HAP-1 (cell line): ENCODE measurements at regions of chr2 and their contacts with region 1.

Region 1: DNA sequence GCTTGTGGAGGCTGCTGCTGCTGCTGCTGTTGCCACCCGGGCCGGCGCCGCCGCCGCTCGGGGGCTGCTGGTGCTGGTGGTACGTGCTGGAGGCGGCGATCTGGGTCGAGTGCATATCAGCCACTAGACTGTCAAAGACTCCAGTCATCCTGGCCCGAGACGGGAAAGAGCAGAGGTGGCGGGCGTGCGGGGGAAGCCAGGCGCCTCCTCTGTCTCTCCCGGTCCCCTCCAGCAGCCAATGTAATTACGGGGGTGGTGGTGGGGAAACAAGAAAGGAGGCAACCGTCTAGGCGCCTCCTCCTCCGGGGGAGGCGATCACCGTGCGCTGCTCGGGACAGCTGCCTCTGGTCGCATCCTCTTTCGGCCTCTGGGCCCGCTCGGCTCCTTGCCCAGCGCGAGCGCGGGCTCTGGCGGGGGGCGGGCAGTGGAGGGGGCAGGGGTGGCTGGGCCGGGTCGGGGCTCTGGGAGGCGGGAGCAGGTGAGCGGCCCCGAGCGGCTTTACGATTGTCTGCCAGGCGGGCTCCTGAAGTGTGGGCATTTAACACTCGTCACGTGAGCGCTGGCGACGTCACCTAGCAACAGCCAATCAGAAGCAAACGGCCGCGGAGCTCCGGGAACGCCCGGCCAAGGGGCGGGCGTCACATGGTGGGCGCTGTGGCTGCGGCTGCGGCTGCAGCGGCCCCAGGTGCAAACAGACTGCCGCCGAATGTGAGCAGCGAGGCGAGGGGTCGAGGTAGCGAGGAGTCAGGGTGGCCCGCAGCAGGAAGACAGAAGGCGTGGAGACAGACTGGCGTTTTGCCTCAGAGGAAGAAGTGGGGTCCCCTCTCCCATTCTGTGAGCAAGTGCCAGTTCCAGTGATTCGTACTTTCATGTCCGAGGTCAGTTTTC is at the start of gene DLX2:
- DNase-seq: peak; percentile 95 to 97
- H3K4me3 ChIP-seq: peak within 1 kb of the TSS; percentile 58
- H3K4me1 ChIP-seq: peaks cover 28% of the 10 kb centered on the region
- H3K27me3 ChIP-seq: no peaks in the 10 kb centered on the region

Region 2: GRCh38 chr2:171509945-171510731 is 592.5 kb before region 1 on chr2:
- in situ Hi-C with region 1: no loop called
- DNase-seq: no peak
- H3K4me3 ChIP-seq: no peak overlapping the region
- H3K4me1 ChIP-seq: peaks cover 6% of the 10 kb centered on the region; the same call in 1 of the 2 replicates
- H3K27me3 ChIP-seq: no peaks in the 10 kb centered on the region

Region 3: DNA sequence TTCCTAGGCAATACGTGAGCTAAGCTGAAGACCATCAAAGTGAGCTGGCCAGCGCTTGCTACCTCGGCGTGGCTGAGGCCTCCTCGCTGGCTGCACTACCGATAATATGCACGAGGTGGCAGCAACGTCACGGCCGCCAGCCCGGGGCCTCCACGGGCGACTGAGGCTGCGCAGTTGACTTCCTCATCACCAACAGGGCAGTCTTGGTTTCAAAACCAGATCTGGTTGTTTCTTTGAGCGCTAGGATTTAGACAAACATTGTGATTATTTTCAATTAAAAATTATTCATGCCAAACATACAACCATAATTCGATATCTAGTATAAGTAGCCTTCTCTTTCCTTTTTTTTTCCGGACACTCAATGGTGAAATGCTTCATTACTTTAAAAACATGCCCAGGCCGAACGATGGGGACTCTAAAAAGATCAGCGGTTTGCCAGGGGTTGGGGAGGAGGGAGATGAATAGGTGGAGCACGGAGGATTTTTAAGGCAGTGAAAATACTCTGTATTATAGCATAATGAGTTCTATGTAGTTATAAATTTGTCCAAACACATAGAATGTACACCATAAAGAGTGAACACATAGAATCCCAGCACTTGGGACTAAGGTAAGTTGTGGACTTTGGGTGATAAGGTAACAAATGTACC is 528.4 kb before region 1 on chr2:
- in situ Hi-C with region 1: no loop called
- DNase-seq: peak; percentile 59 to 87
- H3K4me3 ChIP-seq: no peak overlapping the region
- H3K4me1 ChIP-seq: no peaks in the 10 kb centered on the region
- H3K27me3 ChIP-seq: 0 out of 2 replicates have a peak, but pooled peaks cover 3% of the 10 kb centered on the region

Region 4: DNA sequence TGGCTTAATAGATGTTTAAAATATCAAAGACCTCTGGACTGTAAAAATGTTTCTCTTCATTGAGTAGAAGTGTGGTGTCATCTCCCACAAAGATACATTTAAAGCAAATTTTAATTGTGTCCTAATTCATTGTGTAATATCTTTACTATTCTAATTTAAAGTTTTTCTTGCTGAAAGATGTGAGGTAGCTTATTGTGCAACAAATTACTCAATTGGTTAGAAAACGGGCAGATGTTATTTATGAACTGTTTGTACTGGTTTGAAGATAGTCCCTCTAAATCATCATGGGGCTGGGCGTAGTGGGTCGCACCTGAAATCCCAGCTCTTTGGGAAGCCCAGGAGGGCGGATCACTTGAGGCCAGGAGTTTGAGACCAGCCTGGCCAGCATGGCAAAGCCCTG is 515.1 kb before region 1 on chr2:
- in situ Hi-C with region 1: loop called (anchors 10 kb)
- DNase-seq: no peak
- H3K4me3 ChIP-seq: no peak overlapping the region
- H3K4me1 ChIP-seq: peaks cover 9% of the 10 kb centered on the region
- H3K27me3 ChIP-seq: no peaks in the 10 kb centered on the region

Region 5: GRCh38 chr2:171703574-171704347 is 398.9 kb before region 1 on chr2:
- in situ Hi-C with region 1: loop called (anchors 10 kb)
- DNase-seq: peak in 1 of 2 experiments; percentile 48
- H3K4me3 ChIP-seq: no peak overlapping the region
- H3K4me1 ChIP-seq: peaks cover 13% of the 10 kb centered on the region
- H3K27me3 ChIP-seq: no peaks in the 10 kb centered on the region

Region 6: DNA sequence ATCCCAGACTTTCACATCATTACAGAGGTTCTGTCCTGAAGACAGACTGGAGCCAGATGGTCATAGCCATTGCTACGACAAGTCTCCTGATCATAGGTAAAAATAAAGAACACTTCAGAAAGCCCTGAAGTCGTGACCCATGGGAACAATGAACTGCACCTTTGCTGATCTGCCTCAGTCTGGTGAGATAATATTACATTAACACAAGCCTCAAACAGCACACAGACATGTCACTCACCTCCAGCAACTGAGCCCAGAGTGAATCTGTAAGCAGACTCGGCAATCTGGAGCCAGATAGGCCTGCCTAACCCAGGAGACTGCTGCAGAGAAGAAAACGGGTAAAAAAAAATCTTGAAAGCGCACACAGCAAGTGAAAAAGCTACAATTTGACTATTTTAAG is 287.8 kb before region 1 on chr2:
- in situ Hi-C with region 1: loop called (anchors 5 kb)
- DNase-seq: no peak
- H3K4me3 ChIP-seq: no peak overlapping the region
- H3K4me1 ChIP-seq: peaks cover 7% of the 10 kb centered on the region; the same call in 1 of the 2 replicates
- H3K27me3 ChIP-seq: no peaks in the 10 kb centered on the region